Spleen (tissue), 13 donors: ENCODE measurements at regions of chr12 and their contacts with region 1.

Region 1: GRCh38 chr12:32918890-32919801 is 22.6 kb upstream of the PKP2 start:
- DNase-seq: no peak
- H3K4me3 ChIP-seq: no peak overlapping the region
- H3K27ac ChIP-seq: no peak overlapping the region
- H3K4me1 ChIP-seq: peaks cover 0 to 5% (median 0%) of the 10 kb centered on the region in 6 donors
- H3K27me3 ChIP-seq: no peaks in the 10 kb centered on the region
- CTCF ChIP-seq: peak in 7 of 11 experiments; percentile 23 to 55 (median 40)
- POLR2A ChIP-seq: no peak

Region 2: DNA sequence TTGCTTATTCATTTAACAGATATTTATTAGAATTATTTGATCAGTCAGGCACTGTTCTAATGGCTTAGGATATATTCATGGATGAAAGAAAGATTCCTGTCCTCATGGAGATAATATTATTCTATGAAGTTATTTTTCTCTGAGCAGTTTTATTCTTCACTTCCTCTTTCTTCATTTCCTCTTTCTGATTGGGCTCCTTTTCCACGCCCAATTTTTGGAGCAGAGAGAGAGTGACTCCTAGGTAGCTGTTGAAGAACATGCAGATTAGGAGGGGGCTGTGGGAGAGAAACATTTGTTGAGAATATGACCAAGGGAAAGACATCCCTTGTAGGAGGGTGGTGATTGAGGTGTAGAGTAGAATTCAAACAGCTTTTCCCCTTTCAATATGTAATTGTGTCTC is 157.4 kb before region 1 on chr12:
- intact Hi-C with region 1: loop called (anchors 10 kb)
- DNase-seq: no peak
- H3K4me3 ChIP-seq: no peak overlapping the region
- H3K27ac ChIP-seq: no peak overlapping the region
- H3K4me1 ChIP-seq: peaks cover 0 to 12% (median 9%) of the 10 kb centered on the region in 6 donors
- H3K27me3 ChIP-seq: no peaks in the 10 kb centered on the region
- CTCF ChIP-seq: no peak
- POLR2A ChIP-seq: no peak